ENCODE measurements at regions of chr19 and their contacts with region 1.

Region 1: GRCh38 chr19:31804668-31805067 is 455.4 kb upstream of the TSHZ3 start:
- DNase-seq: no peak
- H3K4me3 ChIP-seq: no peak overlapping the region
- H3K27ac ChIP-seq: no peak overlapping the region
- H3K4me1 ChIP-seq: no peaks in the 10 kb centered on the region
- H3K27me3 ChIP-seq: no peaks in the 10 kb centered on the region
- CTCF ChIP-seq: no peak

Region 2: GRCh38 chr19:31749231-31749630 is 55.4 kb before region 1 on chr19:
- CTCF ChIA-PET with region 1: no interaction called
- dilution Hi-C with region 1: loop called (anchors 5 kb)
- in situ Hi-C with region 1: no loop called
- intact Hi-C with region 1: no loop called
- DNase-seq: no peak
- H3K4me3 ChIP-seq: no peak overlapping the region
- H3K27ac ChIP-seq: no peak overlapping the region
- H3K4me1 ChIP-seq: no peaks in the 10 kb centered on the region
- H3K27me3 ChIP-seq: no peaks in the 10 kb centered on the region
- CTCF ChIP-seq: no peak

Region 3: GRCh38 chr19:31943191-31943661 is 138.6 kb after region 1 on chr19:
- CTCF ChIA-PET with region 1: no interaction called
- dilution Hi-C with region 1: loop called (anchors 10 kb)
- in situ Hi-C with region 1: no loop called
- intact Hi-C with region 1: no loop called
- DNase-seq: no peak
- H3K4me3 ChIP-seq: no peak overlapping the region
- H3K27ac ChIP-seq: no peak overlapping the region
- H3K4me1 ChIP-seq: no peaks in the 10 kb centered on the region
- H3K27me3 ChIP-seq: no peaks in the 10 kb centered on the region
- CTCF ChIP-seq: no peak